ENCODE measurements at regions of chr13 and their contacts with region 1.

Region 1: DNA sequence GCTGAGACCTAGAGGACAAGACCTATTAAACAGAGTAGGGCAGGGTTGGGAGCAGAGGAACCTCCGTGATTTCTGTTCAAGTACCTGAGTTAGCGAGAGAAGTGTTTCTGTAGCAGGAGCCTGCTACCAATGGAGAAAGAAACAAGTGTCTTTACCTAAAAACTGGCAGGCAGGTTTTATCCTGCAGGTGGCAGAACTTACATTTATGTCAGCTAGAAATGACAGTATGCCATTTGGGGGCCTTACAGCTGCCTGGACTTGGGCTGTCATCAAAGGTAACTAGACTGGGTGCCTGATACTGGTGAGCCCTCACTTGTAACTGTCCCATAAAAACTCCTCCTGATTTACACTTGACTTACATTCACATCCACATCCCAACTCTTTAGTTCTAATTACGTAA is 185.3 kb upstream of the MIR17HG start:
- DNase-seq: no peak
- ATAC-seq: peak; percentile 61
- H3K4me3 ChIP-seq: no peak overlapping the region
- H3K27ac ChIP-seq: no peak overlapping the region
- H3K4me1 ChIP-seq: no peaks in the 10 kb centered on the region
- H3K27me3 ChIP-seq: peaks cover 0 to 3% of the 10 kb centered on the region in 2 experiments; a peak in 1 of 4 replicates
- CTCF ChIP-seq: peak in 1 of 3 experiments; percentile 25; a peak in 1 of 6 replicates
- EP300 ChIP-seq: no peak
- POLR2A ChIP-seq: no peak
- RAD21 ChIP-seq: peak; percentile 37

Region 2: DNA sequence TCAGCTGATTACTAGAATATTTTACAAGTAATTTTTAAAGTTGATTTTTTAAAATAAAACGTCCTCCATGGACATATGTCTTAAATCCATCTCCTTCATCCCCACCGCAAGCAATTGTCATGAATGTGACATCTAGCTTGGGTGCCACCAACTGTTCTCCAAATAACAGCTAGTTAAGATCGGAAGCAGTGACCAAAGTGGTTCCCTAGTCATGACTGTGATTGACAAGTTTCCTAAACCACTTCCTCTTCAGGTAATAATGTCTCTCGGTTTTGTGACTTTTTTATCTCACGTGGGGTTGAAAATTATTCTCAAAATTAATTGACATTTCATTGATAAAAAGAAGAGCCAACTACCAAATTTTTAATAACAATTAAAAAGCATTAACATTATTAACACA is 50.1 kb after region 1 on chr13:
- CTCF ChIA-PET with region 1: no interaction called
- POLR2A ChIA-PET with region 1: no interaction called
- RAD21 ChIA-PET with region 1: no interaction called
- SMC1A ChIA-PET with region 1: no interaction called
- in situ Hi-C with region 1: no loop called
- intact Hi-C with region 1: no loop called
- DNase-seq: no peak
- ATAC-seq: no peak
- H3K4me3 ChIP-seq: no peak overlapping the region
- H3K27ac ChIP-seq: no peak overlapping the region
- H3K4me1 ChIP-seq: no peaks in the 10 kb centered on the region
- H3K27me3 ChIP-seq: peaks cover 0 to 4% of the 10 kb centered on the region in 2 experiments; a peak in 1 of 4 replicates
- CTCF ChIP-seq: no peak
- EP300 ChIP-seq: no peak
- POLR2A ChIP-seq: no peak
- RAD21 ChIP-seq: no peak

Region 3: DNA sequence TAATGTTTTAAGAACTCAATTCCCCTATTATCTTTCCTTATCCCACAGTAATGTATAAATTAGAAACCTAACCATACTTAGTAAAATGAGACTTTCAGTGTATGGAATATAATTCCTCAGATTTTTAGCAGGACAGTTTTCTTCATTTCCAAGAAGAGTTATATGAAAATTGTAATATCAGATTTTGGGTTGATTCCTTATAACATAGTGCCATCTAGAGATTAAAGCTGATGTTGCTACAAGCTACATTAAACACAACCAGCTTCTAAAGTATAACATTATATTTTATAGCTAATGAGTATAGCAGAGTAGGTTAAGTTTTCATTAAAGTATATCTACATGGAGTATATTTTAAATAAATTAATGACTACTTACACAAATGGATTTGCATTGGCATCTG is 85.6 kb after region 1 on chr13:
- CTCF ChIA-PET with region 1: interaction called, 15 read pairs
- POLR2A ChIA-PET with region 1: no interaction called
- RAD21 ChIA-PET with region 1: interaction called, 4 read pairs
- SMC1A ChIA-PET with region 1: interaction called, 4 read pairs
- in situ Hi-C with region 1: no loop called
- intact Hi-C with region 1: loop called (anchors 2 kb)
- DNase-seq: no peak
- ATAC-seq: 0 out of 3 replicates have a peak, but pooled peaks have one; percentile 27
- H3K4me3 ChIP-seq: no peak overlapping the region
- H3K27ac ChIP-seq: no peak overlapping the region
- H3K4me1 ChIP-seq: no peaks in the 10 kb centered on the region
- H3K27me3 ChIP-seq: peaks cover 0 to 7% of the 10 kb centered on the region in 2 experiments; a peak in 3 of 4 replicates
- CTCF ChIP-seq: peak in 2 of 3 experiments; percentile 4 to 31; a peak in 3 of 6 replicates
- EP300 ChIP-seq: no peak
- POLR2A ChIP-seq: no peak
- RAD21 ChIP-seq: peak; percentile 52